ENCODE measurements at regions of chr15 and their contacts with region 1.

Region 1: GRCh38 chr15:45429974-45430792 is 51.8 kb upstream of the GATM start:
- DNase-seq: peak; percentile 10
- H3K4me3 ChIP-seq: peak overlapping the region; percentile 59
- H3K27ac ChIP-seq: no peak overlapping the region
- H3K27me3 ChIP-seq: peaks cover 3% of the 10 kb centered on the region
- CTCF ChIP-seq: peak; percentile 100

Region 2: DNA sequence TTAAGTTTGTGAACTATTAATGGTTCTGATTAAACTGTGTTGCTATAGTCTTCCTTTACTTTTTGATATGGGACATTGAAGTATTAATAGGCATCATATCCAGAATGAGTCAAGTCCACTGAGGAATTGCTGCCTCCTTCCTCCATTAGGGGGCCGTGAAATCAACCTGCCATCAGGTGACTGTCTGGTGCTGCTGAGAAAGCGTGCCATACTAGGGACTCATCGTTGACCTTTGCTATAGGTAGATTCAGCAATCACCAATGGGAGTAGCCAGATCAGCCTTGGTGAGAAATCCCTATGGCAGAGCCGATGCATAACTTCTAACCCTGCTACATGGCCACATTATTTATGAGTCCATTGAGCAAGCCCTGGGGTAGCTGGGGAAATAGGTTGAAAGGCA is 208.2 kb before region 1 on chr15:
- CTCF ChIA-PET with region 1: no interaction called
- POLR2A ChIA-PET with region 1: no interaction called
- DNase-seq: no peak
- H3K4me3 ChIP-seq: no peak overlapping the region
- H3K27ac ChIP-seq: no peak overlapping the region
- H3K27me3 ChIP-seq: peaks cover 8% of the 10 kb centered on the region
- CTCF ChIP-seq: no peak

Region 3: DNA sequence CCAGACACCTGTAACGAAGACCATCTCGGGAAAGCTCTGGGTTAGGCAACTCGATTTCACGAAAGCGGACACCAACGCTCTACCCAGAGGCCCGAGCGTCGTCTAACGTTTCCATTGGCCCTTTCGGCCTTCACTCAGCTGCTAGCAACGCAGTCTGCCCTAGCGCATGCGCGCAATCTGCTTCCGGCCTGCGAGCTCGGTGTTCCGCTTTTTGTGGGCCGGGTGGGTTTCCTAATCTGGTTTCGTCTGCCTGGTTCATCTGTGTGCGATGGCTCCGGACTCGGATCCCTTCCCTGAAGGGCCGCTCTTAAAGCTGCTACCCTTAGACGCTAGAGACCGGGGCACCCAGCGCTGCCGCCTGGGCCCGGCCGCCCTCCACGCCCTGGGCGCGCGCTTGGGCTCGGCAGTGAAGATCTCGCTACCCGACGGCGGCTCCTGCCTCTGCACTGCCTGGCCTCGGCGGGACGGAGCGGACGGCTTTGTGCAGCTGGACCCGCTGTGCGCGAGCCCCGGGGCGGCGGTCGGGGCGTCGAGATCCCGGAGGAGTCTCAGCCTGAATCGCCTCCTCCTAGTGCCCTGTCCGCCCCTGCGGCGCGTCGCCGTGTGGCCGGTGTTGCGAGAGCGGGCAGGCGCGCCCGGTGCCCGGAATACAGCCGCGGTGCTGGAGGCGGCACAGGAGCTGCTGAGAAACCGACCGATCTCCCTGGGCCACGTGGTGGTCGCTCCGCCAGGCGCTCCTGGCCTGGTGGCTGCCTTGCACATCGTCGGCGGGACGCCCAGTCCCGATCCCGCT is 27.8 kb before region 1 on chr15:
- CTCF ChIA-PET with region 1: interaction called, 11 read pairs
- POLR2A ChIA-PET with region 1: no interaction called
- DNase-seq: peak; percentile 98
- H3K4me3 ChIP-seq: peak overlapping the region; percentile 87
- H3K27ac ChIP-seq: peak overlapping the region; percentile 53
- H3K27me3 ChIP-seq: peaks cover 3% of the 10 kb centered on the region
- CTCF ChIP-seq: no peak

Region 4: GRCh38 chr15:45442500-45443135 is 12.4 kb after region 1 on chr15:
- CTCF ChIA-PET with region 1: interaction called, 24 read pairs
- POLR2A ChIA-PET with region 1: no interaction called
- DNase-seq: no peak
- H3K4me3 ChIP-seq: no peak overlapping the region
- H3K27ac ChIP-seq: no peak overlapping the region
- H3K27me3 ChIP-seq: no peaks in the 10 kb centered on the region
- CTCF ChIP-seq: no peak

Region 5: DNA sequence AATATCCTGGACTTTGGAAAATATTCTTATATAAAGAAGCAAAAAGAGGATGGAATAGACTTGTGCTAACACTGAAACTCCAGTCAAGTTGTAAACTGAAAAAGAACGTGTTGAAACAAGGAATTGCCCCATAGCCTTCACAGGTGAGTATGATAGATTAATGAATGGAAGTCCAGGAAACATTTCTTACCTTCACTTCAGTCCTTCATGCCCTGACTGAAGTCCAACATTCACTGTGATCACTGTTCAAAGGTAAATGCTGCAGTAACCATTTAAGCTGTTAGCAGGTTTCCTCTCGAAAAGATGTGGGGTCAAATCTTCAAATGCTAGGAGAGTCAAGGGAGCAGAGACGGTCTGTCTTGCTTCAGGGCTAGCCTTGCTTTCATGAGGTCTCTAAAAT is 46.2 kb after region 1 on chr15:
- CTCF ChIA-PET with region 1: interaction called, 10 read pairs
- POLR2A ChIA-PET with region 1: no interaction called
- DNase-seq: no peak
- H3K4me3 ChIP-seq: no peak overlapping the region
- H3K27ac ChIP-seq: no peak overlapping the region
- H3K27me3 ChIP-seq: peaks cover 3% of the 10 kb centered on the region
- CTCF ChIP-seq: no peak

Region 6: DNA sequence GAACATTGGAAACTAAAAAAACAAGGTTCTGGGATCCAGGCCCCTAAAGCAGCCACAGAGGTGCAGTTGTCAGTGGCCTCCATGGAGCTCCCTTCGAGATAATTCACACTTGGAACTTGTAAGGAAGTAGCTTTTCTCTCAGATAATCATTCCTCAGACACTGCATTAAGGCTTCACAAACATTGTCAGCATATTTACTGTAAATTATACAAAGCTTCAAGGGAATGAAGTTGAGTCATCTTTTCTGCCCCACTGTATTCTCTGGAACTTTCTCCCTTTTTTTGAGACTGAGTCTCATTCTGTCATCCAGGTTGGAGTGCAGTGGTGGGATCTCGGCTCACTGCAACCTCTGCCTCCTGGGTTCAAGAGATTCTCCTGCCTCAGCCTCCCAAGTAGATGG is 164.1 kb after region 1 on chr15:
- CTCF ChIA-PET with region 1: interaction called, 10 read pairs
- POLR2A ChIA-PET with region 1: no interaction called
- DNase-seq: no peak
- H3K4me3 ChIP-seq: no peak overlapping the region
- H3K27ac ChIP-seq: peak overlapping the region; percentile 22
- H3K27me3 ChIP-seq: no peaks in the 10 kb centered on the region
- CTCF ChIP-seq: no peak

Measured in AG04450 (cell line).